Activated CD4-positive, alpha-beta T cell treated with anti-CD3 and anti-CD28 coated beads, Interleukin-2, amount 10 ng/mL, durations not matched to agents 24 days and 14 days (primary cell): ENCODE measurements at regions of chr1 and their contacts with region 1.

Region 1: GRCh38 chr1:24228311-24228710 is 41.2 kb upstream of the IFNLR1 start:
- DNase-seq: no peak
- H3K4me3 Mint-ChIP-seq: no peak overlapping the region
- H3K27ac Mint-ChIP-seq: no peak overlapping the region
- H3K4me1 Mint-ChIP-seq: no peaks in the 10 kb centered on the region
- H3K27me3 Mint-ChIP-seq: peaks cover 4% of the 10 kb centered on the region

Region 2: DNA sequence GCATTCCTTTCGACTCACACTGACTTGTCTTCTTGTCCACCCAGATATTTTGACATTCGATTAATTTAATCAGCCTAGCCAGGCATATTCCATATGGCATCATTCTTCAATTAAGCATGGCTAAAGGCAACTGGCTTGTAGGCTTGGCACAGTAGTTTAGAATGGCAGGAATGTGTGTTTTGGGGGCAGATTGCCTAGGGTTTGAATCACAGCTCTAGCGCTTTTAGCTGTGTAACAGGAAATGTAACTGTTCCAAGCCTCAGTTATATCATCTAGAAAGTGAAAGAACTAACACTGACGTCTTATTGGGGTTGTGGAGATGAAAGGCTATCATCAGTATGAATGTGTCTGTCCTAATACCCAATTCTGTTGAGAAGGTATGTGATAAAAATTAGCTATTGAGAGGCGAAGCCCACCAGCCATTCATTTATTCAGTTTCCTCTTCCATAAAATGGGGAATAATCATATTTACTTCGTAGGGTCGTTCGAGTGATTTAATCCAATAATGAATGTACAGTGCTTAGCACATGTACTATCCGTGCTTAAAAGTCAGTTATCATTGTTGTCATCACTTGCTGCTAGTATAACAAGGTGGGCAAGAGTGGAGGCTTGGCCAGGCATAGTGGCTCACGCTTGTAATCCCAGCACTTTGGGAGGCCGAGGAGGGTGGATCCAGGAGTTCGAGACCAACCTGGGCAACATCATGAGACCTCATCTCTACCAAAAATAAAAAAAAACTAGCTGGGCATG is 49.3 kb after region 1 on chr1:
- intact Hi-C with region 1: loop called (anchors 10 kb)
- DNase-seq: peak; percentile 64
- H3K4me3 Mint-ChIP-seq: no peak overlapping the region
- H3K27ac Mint-ChIP-seq: no peak overlapping the region
- H3K4me1 Mint-ChIP-seq: peaks cover 9% of the 10 kb centered on the region
- H3K27me3 Mint-ChIP-seq: peaks cover 28% of the 10 kb centered on the region